MCF 10A (cell line): ENCODE measurements at regions of chr16 and their contacts with region 1.

Region 1: GRCh38 chr16:67521095-67521804 is 7.4 kb upstream of the RIPOR1 start:
- DNase-seq: peak; percentile 97
- H3K4me3 Mint-ChIP-seq: peak overlapping the region; percentile 86
- H3K27ac Mint-ChIP-seq: peak overlapping the region; percentile 98
- H3K4me1 Mint-ChIP-seq: peaks cover 18% of the 10 kb centered on the region
- H3K27me3 Mint-ChIP-seq: peaks cover 19% of the 10 kb centered on the region
- CTCF ChIP-seq: peak; percentile 94

Region 2: DNA sequence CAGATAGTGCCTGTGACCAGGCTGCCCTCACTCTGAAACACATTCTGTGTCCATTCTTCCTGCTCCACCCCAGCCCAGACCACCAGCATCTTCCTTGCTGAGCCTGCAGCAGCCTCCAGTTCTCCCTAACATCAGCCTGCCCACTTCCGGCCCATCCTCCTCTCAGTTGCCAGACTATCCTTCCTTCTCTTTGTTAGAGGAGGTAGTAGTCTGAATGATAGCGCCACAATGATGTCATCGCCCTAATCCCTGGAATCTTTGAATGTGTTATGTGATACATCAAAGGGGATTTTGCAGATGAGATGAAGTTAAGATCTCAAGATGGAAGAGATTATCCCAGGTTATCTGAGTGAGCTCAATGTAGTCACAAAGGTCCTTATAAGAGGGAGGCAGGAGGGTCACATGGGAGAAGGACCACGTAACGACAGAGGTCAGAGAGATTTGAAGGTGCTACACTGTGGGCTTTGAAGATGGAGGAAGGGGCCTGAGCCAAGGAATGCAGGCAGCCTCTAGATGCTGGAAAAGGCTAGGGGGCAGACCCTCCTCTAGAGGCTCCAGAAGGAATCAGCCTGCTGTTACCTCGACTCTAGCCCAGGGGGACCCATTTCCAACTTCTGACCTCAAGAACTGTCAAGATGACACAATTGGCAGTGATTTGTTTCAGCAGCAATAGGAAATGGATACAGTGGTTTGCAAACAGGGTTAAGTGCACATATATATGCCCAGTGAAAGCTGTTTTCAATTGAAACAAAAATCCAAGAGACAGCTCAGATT is 101.6 kb before region 1 on chr16:
- CTCF ChIA-PET with region 1: no interaction called
- POLR2A ChIA-PET with region 1: no interaction called
- intact Hi-C with region 1: no loop called
- DNase-seq: no peak
- H3K4me3 Mint-ChIP-seq: no peak overlapping the region
- H3K27ac Mint-ChIP-seq: no peak overlapping the region
- H3K4me1 Mint-ChIP-seq: peaks cover 10% of the 10 kb centered on the region
- H3K27me3 Mint-ChIP-seq: peaks cover 17% of the 10 kb centered on the region
- CTCF ChIP-seq: no peak

Region 3: GRCh38 chr16:67499106-67499505 is 22.1 kb before region 1 on chr16:
- CTCF ChIA-PET with region 1: interaction called, 69 read pairs
- POLR2A ChIA-PET with region 1: interaction called, 3 read pairs
- intact Hi-C with region 1: no loop called
- DNase-seq: no peak
- H3K4me3 Mint-ChIP-seq: no peak overlapping the region
- H3K27ac Mint-ChIP-seq: no peak overlapping the region
- H3K4me1 Mint-ChIP-seq: no peaks in the 10 kb centered on the region
- H3K27me3 Mint-ChIP-seq: no peaks in the 10 kb centered on the region
- CTCF ChIP-seq: no peak

Region 4: GRCh38 chr16:67555795-67556212 is 34.6 kb after region 1 on chr16:
- CTCF ChIA-PET with region 1: interaction called, 35 read pairs
- POLR2A ChIA-PET with region 1: no interaction called
- intact Hi-C with region 1: no loop called
- DNase-seq: peak; percentile 64
- H3K4me3 Mint-ChIP-seq: no peak overlapping the region
- H3K27ac Mint-ChIP-seq: peak overlapping the region; percentile 80
- H3K4me1 Mint-ChIP-seq: peaks cover 13% of the 10 kb centered on the region
- H3K27me3 Mint-ChIP-seq: no peaks in the 10 kb centered on the region
- CTCF ChIP-seq: no peak

Region 5: GRCh38 chr16:67660564-67661028 is 139.3 kb after region 1 on chr16 and contains the start of gene PARD6A:
- CTCF ChIA-PET with region 1: interaction called, 57 read pairs
- POLR2A ChIA-PET with region 1: interaction called, 4 read pairs
- intact Hi-C with region 1: loop called (anchors 2 kb)
- DNase-seq: peak; percentile 94
- H3K4me3 Mint-ChIP-seq: peak within 1 kb of the TSS; percentile 86
- H3K27ac Mint-ChIP-seq: peak within 1 kb of the TSS; percentile 97
- H3K4me1 Mint-ChIP-seq: peaks cover 6% of the 10 kb centered on the region
- H3K27me3 Mint-ChIP-seq: no peaks in the 10 kb centered on the region
- CTCF ChIP-seq: no peak
- total RNA-seq, gene PARD6A: 3.2 and 4.5 TPM in 2 replicates

Region 6: GRCh38 chr16:67806428-67807147 is 285.3 kb after region 1 on chr16 and contains the starts of genes RANBP10 and TSNAXIP1:
- CTCF ChIA-PET with region 1: interaction called, 10 read pairs
- POLR2A ChIA-PET with region 1: interaction called, 3 read pairs
- intact Hi-C with region 1: loop called (anchors 10 kb)
- DNase-seq: peak; percentile 99
- H3K4me3 Mint-ChIP-seq: peak within 1 kb of the TSS; percentile 90
- H3K27ac Mint-ChIP-seq: peak within 1 kb of the TSS; percentile 89
- H3K4me1 Mint-ChIP-seq: peaks cover 5% of the 10 kb centered on the region
- H3K27me3 Mint-ChIP-seq: no peaks in the 10 kb centered on the region
- CTCF ChIP-seq: no peak
- total RNA-seq, gene RANBP10: 17.2 and 21.7 TPM in 2 replicates
- total RNA-seq, gene TSNAXIP1: 1.1 and 1.5 TPM in 2 replicates